ENCODE measurements at regions of chr6 and their contacts with region 1.

Region 1: DNA sequence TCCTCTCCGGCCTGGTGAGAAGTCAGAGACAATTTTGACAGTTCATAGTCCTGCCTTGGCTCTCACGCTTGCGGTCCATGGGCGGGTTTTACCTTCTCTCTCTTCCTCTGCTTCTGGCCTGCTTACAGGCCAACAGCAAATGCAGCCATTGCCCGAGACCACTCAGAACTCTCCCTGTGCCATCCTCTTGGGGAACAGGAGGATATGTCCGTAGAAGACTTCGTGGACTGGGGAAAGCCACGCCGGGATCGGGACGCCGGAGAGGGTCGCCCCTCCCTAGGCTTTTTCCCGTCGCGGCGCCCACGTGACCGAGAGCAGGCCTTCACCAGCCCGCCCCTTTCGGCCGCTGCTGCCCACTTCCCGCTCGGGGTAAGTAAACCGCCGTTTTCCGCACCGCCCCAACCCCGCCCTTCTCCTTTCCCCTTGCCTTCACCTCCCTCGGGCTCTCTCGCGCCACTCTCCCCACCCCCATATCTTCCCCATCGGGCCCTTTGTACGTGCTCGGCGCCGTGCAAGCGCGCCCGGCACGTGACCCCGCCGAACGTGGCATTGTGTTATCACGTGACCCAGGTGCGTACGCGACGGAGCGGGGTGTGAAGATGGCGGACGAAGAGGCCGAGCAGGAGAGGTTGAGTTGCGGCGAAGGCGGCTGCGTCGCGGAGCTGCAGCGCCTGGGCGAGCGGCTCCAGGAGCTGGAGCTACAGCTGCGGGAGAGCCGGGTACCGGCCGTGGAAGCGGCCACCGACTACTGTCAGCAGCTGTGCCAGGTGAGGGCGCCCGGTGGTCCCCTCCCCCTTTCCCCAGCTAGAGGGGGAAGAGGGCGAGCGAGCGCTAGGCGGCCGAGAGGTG is at the start of gene ZNF292:
- DNase-seq: peak; percentile 97 to 98
- H3K4me3 ChIP-seq: peak within 1 kb of the TSS; percentile 92
- H3K4me3 Mint-ChIP-seq: peak within 1 kb of the TSS; percentile 98
- H3K27ac Mint-ChIP-seq: peak within 1 kb of the TSS; percentile 95
- H3K4me1 ChIP-seq: 0 out of 2 replicates have a peak, but pooled peaks cover 18% of the 10 kb centered on the region
- H3K4me1 Mint-ChIP-seq: peaks cover 6% of the 10 kb centered on the region
- H3K27me3 ChIP-seq: no peaks in the 10 kb centered on the region
- H3K27me3 Mint-ChIP-seq: no peaks in the 10 kb centered on the region
- CTCF ChIP-seq: no peak
- total RNA-seq, gene ZNF292: 32.2 and 35.8 TPM in 2 replicates

Region 2: GRCh38 chr6:87074101-87074621 is 81.1 kb before region 1 on chr6:
- CTCF ChIA-PET with region 1: interaction called, 3 read pairs
- POLR2A ChIA-PET with region 1: no interaction called
- intact Hi-C with region 1: loop called (anchors 1 kb)
- DNase-seq: peak in 1 of 2 experiments; percentile 71
- H3K4me3 ChIP-seq: no peak overlapping the region
- H3K4me3 Mint-ChIP-seq: no peak overlapping the region
- H3K27ac Mint-ChIP-seq: peak overlapping the region; percentile 87
- H3K4me1 ChIP-seq: peaks cover 36% of the 10 kb centered on the region
- H3K4me1 Mint-ChIP-seq: peaks cover 21% of the 10 kb centered on the region
- H3K27me3 ChIP-seq: no peaks in the 10 kb centered on the region
- H3K27me3 Mint-ChIP-seq: no peaks in the 10 kb centered on the region
- CTCF ChIP-seq: no peak

Region 3: DNA sequence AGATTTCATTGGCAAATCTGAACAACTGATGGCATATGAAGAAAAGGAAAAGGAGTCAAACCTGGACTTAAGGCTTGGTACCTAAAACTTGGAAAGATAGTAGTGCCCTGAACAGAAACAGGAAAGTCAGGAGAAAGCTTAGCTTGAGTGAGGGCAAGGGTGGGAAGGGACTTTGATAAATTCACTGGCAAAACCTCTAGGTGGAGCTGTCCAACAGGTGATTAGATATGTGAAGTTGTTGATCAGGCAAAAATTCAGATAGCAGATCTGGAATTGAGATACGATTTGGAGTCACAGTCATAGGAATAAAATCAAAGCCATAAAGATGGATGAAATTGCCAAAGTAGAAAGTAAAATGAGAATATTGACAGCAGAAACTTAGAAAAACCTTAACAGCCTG is 16.0 kb before region 1 on chr6:
- CTCF ChIA-PET with region 1: no interaction called
- POLR2A ChIA-PET with region 1: no interaction called
- intact Hi-C with region 1: no loop called
- DNase-seq: peak in 1 of 2 experiments; percentile 60
- H3K4me3 ChIP-seq: no peak overlapping the region
- H3K4me3 Mint-ChIP-seq: no peak overlapping the region
- H3K27ac Mint-ChIP-seq: no peak overlapping the region
- H3K4me1 ChIP-seq: no peaks in the 10 kb centered on the region
- H3K4me1 Mint-ChIP-seq: no peaks in the 10 kb centered on the region
- H3K27me3 ChIP-seq: no peaks in the 10 kb centered on the region
- H3K27me3 Mint-ChIP-seq: peaks cover 13% of the 10 kb centered on the region
- CTCF ChIP-seq: peak; percentile 61 to 71

Region 4: GRCh38 chr6:87213364-87213763 is 58.1 kb after region 1 on chr6:
- CTCF ChIA-PET with region 1: no interaction called
- POLR2A ChIA-PET with region 1: no interaction called
- intact Hi-C with region 1: loop called (anchors 2 kb)
- DNase-seq: peak; percentile 74 to 81
- H3K4me3 ChIP-seq: no peak overlapping the region
- H3K4me3 Mint-ChIP-seq: peak overlapping the region; percentile 73
- H3K27ac Mint-ChIP-seq: peak overlapping the region; percentile 84
- H3K4me1 ChIP-seq: peaks cover 16% of the 10 kb centered on the region
- H3K4me1 Mint-ChIP-seq: peaks cover 16% of the 10 kb centered on the region
- H3K27me3 ChIP-seq: no peaks in the 10 kb centered on the region
- H3K27me3 Mint-ChIP-seq: no peaks in the 10 kb centered on the region
- CTCF ChIP-seq: no peak

Region 5: DNA sequence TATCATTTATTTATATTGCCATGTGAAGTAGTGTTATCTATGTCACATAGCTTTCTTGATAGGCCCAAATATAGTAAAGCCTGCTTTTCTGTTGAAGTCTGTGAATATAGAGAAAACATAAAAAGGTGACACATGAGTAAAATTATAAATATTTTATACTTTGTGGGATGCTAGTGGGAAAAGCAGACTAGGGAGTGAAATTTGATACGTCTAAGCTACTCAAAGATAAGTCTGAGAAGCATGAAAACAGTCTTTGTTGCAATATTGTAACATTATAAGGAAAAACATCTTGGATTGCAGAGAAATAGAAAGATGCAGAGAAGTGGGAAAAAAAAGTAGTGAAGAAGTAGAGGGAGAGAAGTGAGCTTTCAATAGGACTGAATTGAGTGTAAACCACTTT is 75.6 kb after region 1 on chr6:
- CTCF ChIA-PET with region 1: no interaction called
- POLR2A ChIA-PET with region 1: no interaction called
- intact Hi-C with region 1: loop called (anchors 5 kb)
- DNase-seq: no peak
- H3K4me3 ChIP-seq: no peak overlapping the region
- H3K4me3 Mint-ChIP-seq: no peak overlapping the region
- H3K27ac Mint-ChIP-seq: no peak overlapping the region
- H3K4me1 ChIP-seq: peaks cover 5% of the 10 kb centered on the region
- H3K4me1 Mint-ChIP-seq: peaks cover 2% of the 10 kb centered on the region
- H3K27me3 ChIP-seq: no peaks in the 10 kb centered on the region
- H3K27me3 Mint-ChIP-seq: no peaks in the 10 kb centered on the region
- CTCF ChIP-seq: no peak

Region 6: DNA sequence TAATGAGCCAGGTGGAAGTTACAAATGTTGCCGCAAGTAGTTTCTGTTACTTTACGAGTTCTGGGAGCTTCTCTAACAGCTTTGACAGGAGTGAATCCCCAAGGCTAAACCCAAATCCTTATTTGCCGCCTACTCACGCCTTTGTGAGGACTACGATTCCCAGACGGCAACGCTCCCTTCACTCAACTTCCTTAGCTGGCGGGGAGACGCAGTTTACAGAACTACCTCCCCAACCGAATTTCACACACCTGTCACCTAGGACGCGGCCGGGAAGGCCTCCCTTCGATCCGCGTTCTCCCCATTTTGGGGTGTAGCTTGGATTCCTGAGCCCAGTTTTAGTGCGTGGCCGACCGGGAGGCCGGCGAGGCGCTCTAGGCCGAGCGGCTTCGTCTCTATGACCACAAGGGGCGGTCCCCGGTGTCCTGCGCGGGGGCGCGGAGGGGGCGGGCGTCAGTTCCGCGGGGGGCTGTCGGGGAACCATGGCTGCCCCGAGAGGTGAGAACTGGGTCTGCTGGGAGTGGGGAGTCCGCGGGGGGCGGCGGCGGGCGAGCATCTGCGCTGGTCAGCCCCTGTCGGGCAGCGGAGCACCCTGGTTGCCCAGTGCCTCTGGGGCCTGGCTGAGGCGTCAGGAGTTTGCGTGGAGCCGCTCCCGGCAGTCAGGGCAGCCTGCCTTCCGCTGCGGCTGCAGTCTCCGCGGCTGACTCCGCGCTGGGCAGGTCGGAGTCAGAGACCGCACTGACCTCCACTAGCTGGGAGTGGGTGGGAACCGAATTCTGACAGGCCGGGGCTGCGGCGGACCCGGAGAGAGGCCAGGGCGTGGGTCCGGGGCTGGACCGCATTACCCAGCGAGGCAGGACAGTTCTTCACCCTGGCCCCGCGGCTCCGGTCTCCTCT is 317.6 kb after region 1 on chr6 and contains the start of gene SLC35A1:
- CTCF ChIA-PET with region 1: no interaction called
- POLR2A ChIA-PET with region 1: no interaction called
- intact Hi-C with region 1: loop called (anchors 10 kb)
- DNase-seq: peak; percentile 73 to 86
- H3K4me3 ChIP-seq: peak within 1 kb of the TSS; percentile 84
- H3K4me3 Mint-ChIP-seq: peak within 1 kb of the TSS; percentile 84
- H3K27ac Mint-ChIP-seq: peak within 1 kb of the TSS; percentile 93
- H3K4me1 ChIP-seq: no peaks in the 10 kb centered on the region
- H3K4me1 Mint-ChIP-seq: no peaks in the 10 kb centered on the region
- H3K27me3 ChIP-seq: no peaks in the 10 kb centered on the region
- H3K27me3 Mint-ChIP-seq: peaks cover 2% of the 10 kb centered on the region
- CTCF ChIP-seq: peak; percentile 14 to 25
- total RNA-seq, gene SLC35A1: 12.3 and 12.7 TPM in 2 replicates

Region 7: DNA sequence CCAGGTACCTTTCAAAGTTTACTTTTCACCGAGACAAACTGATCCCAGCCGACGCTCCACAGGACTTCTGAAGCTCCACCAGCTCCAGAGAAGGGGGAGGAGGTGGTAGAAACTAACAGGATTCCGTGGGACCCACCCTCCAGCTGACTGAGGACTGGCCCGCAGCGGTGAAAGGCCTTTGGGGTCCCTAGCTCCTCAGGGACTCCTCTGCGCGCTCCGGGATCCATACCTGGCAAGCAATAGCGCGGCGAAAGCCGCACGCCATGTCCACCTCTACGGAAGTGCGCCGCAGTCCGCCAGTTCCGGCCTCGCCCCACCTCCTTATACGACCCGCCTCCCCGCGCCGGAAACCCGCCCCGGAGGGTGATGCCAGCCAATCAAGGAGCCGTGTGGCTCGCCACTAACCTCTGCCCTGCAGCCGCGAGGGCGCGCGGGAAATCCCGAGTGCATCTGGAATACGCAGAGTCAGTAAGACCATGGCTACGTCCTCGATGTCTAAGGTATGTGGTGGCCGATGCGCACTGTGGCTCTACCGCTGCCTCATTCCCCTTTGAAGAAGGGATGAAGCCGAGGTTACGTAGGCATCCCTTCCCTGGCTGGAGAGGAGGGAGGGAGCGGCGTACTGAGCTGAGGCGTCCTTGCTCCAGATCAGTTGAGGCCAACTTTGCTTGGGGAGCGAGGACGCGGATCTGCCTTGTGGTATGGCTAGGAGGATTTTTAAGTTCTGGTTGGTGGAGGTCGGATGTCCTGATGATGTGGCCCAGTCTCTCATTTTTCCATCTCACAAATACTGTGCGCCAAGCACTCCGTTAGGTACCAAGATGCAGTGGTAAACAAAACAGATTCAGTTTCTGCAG is 434.7 kb after region 1 on chr6 and contains the starts of genes ORC3 and RARS2:
- CTCF ChIA-PET with region 1: no interaction called
- POLR2A ChIA-PET with region 1: interaction called, 3 read pairs
- intact Hi-C with region 1: loop called (anchors 10 kb)
- DNase-seq: peak; percentile 96
- H3K4me3 ChIP-seq: peak within 1 kb of the TSS; percentile 73
- H3K4me3 Mint-ChIP-seq: peak within 1 kb of the TSS; percentile 93
- H3K27ac Mint-ChIP-seq: peak within 1 kb of the TSS; percentile 91
- H3K4me1 ChIP-seq: peaks cover 18% of the 10 kb centered on the region
- H3K4me1 Mint-ChIP-seq: peaks cover 15% of the 10 kb centered on the region
- H3K27me3 ChIP-seq: no peaks in the 10 kb centered on the region
- H3K27me3 Mint-ChIP-seq: no peaks in the 10 kb centered on the region
- CTCF ChIP-seq: no peak
- total RNA-seq, gene ORC3: 33.8 and 34.5 TPM in 2 replicates
- total RNA-seq, gene RARS2: 32.0 and 37.4 TPM in 2 replicates

Region 8: GRCh38 chr6:87701676-87702588 is 546.7 kb after region 1 on chr6 and contains the start of gene AKIRIN2:
- CTCF ChIA-PET with region 1: no interaction called
- POLR2A ChIA-PET with region 1: no interaction called
- intact Hi-C with region 1: loop called (anchors 5 kb)
- DNase-seq: peak; percentile 96 to 97
- H3K4me3 ChIP-seq: peak within 1 kb of the TSS; percentile 60
- H3K4me3 Mint-ChIP-seq: peak within 1 kb of the TSS; percentile 99
- H3K27ac Mint-ChIP-seq: peak within 1 kb of the TSS; percentile 93
- H3K4me1 ChIP-seq: peaks cover 9% of the 10 kb centered on the region
- H3K4me1 Mint-ChIP-seq: peaks cover 9% of the 10 kb centered on the region
- H3K27me3 ChIP-seq: no peaks in the 10 kb centered on the region
- H3K27me3 Mint-ChIP-seq: no peaks in the 10 kb centered on the region
- CTCF ChIP-seq: no peak
- total RNA-seq, gene AKIRIN2: 51.3 and 53.5 TPM in 2 replicates

Measured in Caco-2 (cell line).